ENCODE measurements at regions of chr1 and their contacts with region 1.

Region 1: DNA sequence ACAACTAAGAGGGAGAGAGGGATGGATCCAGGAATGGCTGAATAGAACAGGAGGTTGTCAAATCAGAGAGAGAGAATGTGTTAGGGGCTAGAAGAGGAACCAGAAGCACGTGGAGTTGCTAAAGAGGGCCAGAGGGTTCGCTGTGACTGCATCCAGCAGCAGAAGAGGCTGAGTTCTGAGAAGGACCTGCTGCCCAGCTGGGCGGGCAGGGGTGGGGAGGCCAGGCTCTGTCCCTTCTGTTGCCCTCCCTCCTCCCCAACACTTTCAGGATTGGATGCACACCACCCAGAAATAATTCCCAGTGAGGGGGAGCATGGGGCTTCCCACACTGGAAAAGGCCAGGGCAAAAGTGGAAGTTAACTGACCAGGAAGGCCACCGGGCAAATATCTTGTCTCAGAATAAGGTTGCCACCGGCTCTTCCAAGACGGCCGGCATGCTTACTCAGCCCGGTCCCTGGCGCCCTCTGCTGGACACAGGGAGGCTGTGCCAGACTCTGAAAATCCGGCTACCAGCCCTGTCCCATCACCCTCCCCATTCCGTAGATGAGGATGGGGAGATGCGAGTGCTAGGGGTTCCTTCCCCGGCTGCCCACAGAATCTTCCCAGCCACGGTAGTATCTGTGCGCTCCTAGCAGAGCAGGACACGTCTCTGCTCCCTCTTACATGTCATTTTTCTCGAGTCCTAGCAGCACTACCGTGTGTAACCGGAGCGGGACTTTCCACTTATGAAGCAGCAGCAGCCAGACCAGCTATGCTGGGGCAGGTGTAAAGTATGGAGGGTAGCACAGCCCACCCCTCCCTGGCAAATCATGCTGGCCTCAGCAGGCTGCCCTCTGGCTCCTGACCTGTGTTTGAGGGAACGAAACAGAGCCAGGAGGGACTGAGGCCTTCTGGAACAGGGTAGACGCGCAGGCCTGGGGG is 46.8 kb upstream of the A3GALT2 start:
- DNase-seq: peak; percentile 67
- H3K4me3 ChIP-seq: no peak overlapping the region
- H3K27ac ChIP-seq: no peak overlapping the region
- H3K4me1 ChIP-seq: no peaks in the 10 kb centered on the region
- H3K27me3 ChIP-seq: no peaks in the 10 kb centered on the region
- CTCF ChIP-seq: peak; percentile 90 to 98
- POLR2A ChIP-seq: no peak

Region 2: DNA sequence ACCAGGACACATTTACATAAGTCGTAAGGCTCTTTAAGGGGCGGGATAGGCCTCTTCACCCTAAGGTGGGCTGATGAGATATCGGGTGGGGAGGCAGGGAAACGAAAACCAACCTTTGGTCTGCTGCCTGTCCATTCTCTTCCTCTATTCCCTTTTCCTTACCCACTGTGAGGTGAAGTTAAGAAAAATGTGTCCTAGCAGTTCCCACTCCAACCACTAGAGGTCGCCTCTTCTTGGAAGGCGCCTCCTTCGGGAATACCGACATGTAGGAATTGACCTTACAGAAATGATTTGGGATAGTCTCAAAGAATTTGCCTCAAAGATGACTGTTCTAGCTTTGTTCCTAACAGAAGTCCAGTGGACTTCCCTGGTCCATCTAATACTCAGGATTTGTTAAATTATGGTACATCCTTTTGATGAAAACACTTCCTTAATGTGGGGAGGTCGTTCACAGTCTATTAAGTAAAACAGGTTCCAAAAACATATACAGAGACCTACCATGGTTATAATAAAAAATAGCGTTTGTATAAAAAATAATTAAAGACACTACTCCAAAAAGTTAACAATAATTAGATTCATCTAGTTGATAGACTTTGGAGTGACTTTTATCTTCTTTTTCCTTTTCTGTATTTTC is 272.7 kb before region 1 on chr1:
- CTCF ChIA-PET with region 1: no interaction called
- POLR2A ChIA-PET with region 1: no interaction called
- dilution Hi-C with region 1: no loop called
- intact Hi-C with region 1: loop called (anchors 2 kb)
- DNase-seq: peak; percentile 76
- H3K4me3 ChIP-seq: no peak overlapping the region
- H3K27ac ChIP-seq: no peak overlapping the region
- H3K4me1 ChIP-seq: no peaks in the 10 kb centered on the region
- H3K27me3 ChIP-seq: no peaks in the 10 kb centered on the region
- CTCF ChIP-seq: peak; percentile 89 to 93
- POLR2A ChIP-seq: no peak

Region 3: DNA sequence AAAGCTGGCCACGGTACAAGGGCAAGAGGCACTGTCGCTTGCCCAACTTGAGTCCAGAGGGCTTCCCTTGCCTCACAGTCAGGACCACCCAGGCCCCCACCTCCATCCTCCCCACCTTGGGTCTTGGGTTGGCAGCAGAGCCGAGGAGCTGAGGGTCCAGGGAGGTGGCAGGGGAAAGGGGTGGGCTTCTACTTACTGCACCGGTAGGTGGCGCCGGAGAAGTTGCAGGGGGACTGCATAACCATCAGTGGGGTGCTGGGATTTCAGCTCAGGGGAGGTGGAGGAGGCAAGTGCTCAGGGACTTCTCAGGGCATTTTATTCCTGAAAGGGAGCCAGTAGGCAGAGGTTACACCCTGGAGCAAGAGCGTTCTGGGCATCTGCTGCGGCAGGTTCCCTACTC is 229.9 kb before region 1 on chr1:
- CTCF ChIA-PET with region 1: no interaction called
- POLR2A ChIA-PET with region 1: no interaction called
- dilution Hi-C with region 1: no loop called
- intact Hi-C with region 1: loop called (anchors 1 kb)
- DNase-seq: peak; percentile 50
- H3K4me3 ChIP-seq: no peak overlapping the region
- H3K27ac ChIP-seq: no peak overlapping the region
- H3K4me1 ChIP-seq: no peaks in the 10 kb centered on the region
- H3K27me3 ChIP-seq: peaks cover 2 to 3% of the 10 kb centered on the region in 2 experiments
- CTCF ChIP-seq: peak; percentile 51 to 80
- POLR2A ChIP-seq: no peak

Region 4: DNA sequence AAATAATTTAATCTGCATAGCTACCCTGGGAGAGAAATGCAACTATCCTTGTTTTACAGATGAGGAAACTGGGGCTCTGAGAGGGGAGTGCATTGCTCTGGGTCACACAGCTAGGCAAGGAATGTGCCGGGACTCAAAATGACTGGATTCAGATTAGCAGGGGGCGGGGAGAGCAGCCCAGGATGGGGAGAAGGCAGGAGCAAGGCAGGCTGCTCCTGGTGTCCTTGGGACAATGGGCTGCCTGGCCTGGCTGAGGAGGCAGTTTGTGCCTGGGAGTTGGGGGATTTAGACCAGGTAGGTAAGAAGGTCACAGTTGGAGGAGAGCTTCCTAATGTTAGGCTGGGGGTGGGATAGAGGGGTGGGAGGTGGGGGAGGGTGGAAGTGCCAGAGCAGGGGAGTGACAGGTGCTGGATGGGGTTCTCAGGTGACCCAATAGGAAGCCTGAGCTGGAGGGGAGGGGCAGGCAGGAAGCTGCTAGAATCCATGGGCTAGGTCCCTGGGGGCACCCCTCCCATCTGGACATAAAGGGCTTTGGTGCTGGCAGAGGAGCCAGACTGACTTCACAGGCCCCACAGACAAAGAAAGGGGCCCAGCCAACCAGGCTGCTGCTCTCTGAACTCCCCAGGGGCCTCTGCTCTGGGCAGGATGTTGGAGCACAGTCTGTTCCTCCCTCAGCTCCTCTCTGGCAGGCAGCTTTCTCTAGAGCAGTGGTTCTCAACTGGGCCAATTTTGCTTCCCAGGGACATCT is 214.9 kb before region 1 on chr1:
- CTCF ChIA-PET with region 1: no interaction called
- POLR2A ChIA-PET with region 1: interaction called, 13 read pairs
- dilution Hi-C with region 1: no loop called
- intact Hi-C with region 1: no loop called
- DNase-seq: no peak
- H3K4me3 ChIP-seq: no peak overlapping the region
- H3K27ac ChIP-seq: no peak overlapping the region
- H3K4me1 ChIP-seq: no peaks in the 10 kb centered on the region
- H3K27me3 ChIP-seq: no peaks in the 10 kb centered on the region
- CTCF ChIP-seq: no peak
- POLR2A ChIP-seq: no peak

Region 5: DNA sequence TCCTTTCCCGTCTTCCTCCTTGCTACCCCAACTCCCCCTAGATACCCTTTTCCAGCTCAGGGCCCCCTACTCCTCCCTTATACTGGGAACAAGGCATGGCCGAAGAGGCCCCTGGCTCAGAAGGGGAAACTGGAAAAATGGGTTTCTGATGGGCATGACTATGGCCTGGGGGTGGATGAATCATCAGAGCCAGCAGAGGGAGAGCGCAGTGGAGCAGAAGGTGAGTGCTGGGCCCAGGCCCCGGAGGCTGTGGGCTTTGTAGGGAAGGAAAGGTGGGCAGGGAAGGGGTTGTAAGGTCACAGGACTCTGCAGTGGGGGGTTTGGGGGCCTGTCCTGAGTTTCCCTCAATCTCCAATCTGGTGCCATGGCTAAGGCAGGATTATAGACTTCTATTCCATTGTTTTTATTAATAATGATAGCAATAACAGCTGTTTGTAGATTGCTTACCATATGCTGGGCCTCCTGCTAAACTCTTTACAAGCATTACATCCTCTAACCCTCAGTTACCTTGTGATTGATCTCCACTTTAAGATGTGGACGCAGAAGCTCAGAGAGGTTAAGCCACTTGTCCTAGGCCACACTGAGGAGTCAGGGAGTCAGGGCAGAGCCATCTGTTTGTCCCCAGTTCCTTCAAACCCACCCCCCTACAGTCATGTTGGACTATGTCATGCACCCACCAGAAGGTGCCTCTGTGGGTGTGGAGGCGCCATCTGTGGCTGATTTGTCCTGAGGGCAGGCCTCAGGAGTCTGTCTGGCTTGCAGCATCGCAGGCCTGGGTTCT is 147.7 kb before region 1 on chr1:
- CTCF ChIA-PET with region 1: interaction called, 9 read pairs
- POLR2A ChIA-PET with region 1: no interaction called
- dilution Hi-C with region 1: no loop called
- intact Hi-C with region 1: loop called (anchors 1 kb)
- DNase-seq: no peak
- H3K4me3 ChIP-seq: no peak overlapping the region
- H3K27ac ChIP-seq: no peak overlapping the region
- H3K4me1 ChIP-seq: peaks cover 5% of the 10 kb centered on the region
- H3K27me3 ChIP-seq: peaks cover 3 to 12% of the 10 kb centered on the region in 2 experiments
- CTCF ChIP-seq: no peak
- POLR2A ChIP-seq: no peak

Region 6: DNA sequence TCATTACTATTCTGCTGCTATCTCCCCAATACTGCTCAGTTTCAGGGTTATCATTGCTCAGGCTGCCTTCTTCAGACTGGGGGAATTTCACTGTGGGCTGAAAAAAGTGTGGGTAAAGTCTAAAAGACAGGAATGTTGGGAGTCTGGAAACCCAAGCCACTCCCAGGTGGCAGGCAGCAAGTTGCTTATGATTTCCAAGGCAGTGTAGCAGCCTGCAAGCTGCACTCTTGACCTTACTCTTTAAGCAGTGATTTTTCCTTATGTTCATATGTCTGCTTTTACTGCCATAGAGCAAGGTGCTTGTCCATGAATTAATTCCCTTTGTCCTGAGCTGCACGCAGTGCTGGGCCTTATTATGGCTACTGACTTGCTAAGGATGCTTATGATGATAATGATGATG is 10.0 kb after region 1 on chr1:
- CTCF ChIA-PET with region 1: no interaction called
- POLR2A ChIA-PET with region 1: no interaction called
- dilution Hi-C with region 1: no loop called
- intact Hi-C with region 1: no loop called
- DNase-seq: peak; percentile 7
- H3K4me3 ChIP-seq: no peak overlapping the region
- H3K27ac ChIP-seq: no peak overlapping the region
- H3K4me1 ChIP-seq: no peaks in the 10 kb centered on the region
- H3K27me3 ChIP-seq: no peaks in the 10 kb centered on the region
- CTCF ChIP-seq: no peak
- POLR2A ChIP-seq: no peak

Region 7: DNA sequence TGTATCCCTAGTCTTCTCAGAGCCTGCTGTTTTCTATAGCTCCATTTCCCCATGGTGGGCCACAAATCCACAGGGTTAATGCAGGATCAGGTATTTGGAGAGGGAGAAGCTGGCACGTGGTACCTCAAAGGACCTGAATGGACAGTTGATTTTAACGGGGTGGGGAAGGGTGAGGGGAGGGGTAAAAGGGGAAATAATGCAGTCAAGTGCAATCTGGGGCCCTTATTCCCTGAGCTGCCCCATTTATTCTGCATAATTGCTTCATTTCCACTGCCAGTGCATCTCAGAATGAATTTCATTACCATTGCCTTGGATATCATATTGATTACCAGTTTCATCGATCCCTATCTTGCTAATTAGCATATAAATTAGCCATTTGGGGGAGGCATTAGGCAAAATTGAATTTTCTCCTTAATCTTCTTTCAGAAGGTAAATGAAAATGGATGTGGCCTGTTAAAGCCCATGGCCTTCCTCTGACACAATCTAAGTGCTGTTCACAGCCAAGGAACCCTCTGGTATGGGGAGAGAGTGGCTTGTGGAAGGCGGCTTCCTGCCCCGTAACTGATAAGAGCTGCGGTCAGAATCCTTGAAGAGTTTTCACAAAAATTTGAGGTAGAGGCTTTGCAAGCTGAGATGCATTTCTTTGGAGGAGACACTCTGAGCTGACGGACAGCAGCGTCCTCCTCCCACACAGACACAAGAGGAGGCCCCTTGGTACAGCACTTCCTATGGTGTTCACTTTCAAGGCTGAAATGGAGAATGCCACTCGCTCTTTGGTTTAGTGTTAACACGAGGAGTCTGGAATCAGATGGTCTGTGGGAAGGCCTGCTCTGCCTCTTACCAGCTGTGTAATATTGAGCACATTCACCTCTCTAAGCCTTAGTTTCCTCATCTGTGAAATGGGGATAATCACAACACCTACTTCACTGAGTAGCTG is 28.7 kb after region 1 on chr1:
- CTCF ChIA-PET with region 1: no interaction called
- POLR2A ChIA-PET with region 1: no interaction called
- dilution Hi-C with region 1: no loop called
- intact Hi-C with region 1: no loop called
- DNase-seq: no peak
- H3K4me3 ChIP-seq: no peak overlapping the region
- H3K27ac ChIP-seq: no peak overlapping the region
- H3K4me1 ChIP-seq: no peaks in the 10 kb centered on the region
- H3K27me3 ChIP-seq: no peaks in the 10 kb centered on the region
- CTCF ChIP-seq: no peak
- POLR2A ChIP-seq: no peak

Region 8: GRCh38 chr1:33420870-33421775 is 53.4 kb after region 1 on chr1:
- CTCF ChIA-PET with region 1: no interaction called
- POLR2A ChIA-PET with region 1: no interaction called
- dilution Hi-C with region 1: no loop called
- intact Hi-C with region 1: no loop called
- DNase-seq: peak; percentile 74
- H3K4me3 ChIP-seq: peak overlapping the region in 1 of 3 experiments; percentile 14
- H3K27ac ChIP-seq: peak overlapping the region; percentile 42
- H3K4me1 ChIP-seq: peaks cover 14% of the 10 kb centered on the region
- H3K27me3 ChIP-seq: no peaks in the 10 kb centered on the region
- CTCF ChIP-seq: no peak
- POLR2A ChIP-seq: no peak

Measured in endothelial cell of umbilical vein (primary cell).